Aorta (tissue), 5 donors: ENCODE measurements at regions of chr9 and their contacts with region 1.

Region 1: GRCh38 chr9:14096258-14096922 is 217.6 kb downstream of the NFIB start:
- DNase-seq: no peak
- ATAC-seq: peak; percentile 86
- H3K4me3 ChIP-seq: peak overlapping the region; percentile 12 to 15
- H3K27ac ChIP-seq: peak overlapping the region; percentile 55 to 87
- H3K4me1 ChIP-seq: peaks cover 0 to 3% of the 10 kb centered on the region in 2 donors
- H3K27me3 ChIP-seq: no peaks in the 10 kb centered on the region

Region 2: GRCh38 chr9:13878241-13878711 is 218.1 kb before region 1 on chr9:
- intact Hi-C with region 1: no loop called
- DNase-seq: no peak
- ATAC-seq: no peak
- H3K4me3 ChIP-seq: no peak overlapping the region
- H3K27ac ChIP-seq: no peak overlapping the region
- H3K4me1 ChIP-seq: no peaks in the 10 kb centered on the region
- H3K27me3 ChIP-seq: no peaks in the 10 kb centered on the region

Region 3: GRCh38 chr9:13915591-13916326 is 180.6 kb before region 1 on chr9:
- intact Hi-C with region 1: loop called in 1 of 2 experiments (anchors 10 kb)
- DNase-seq: no peak
- ATAC-seq: peak; percentile 51
- H3K4me3 ChIP-seq: no peak overlapping the region
- H3K27ac ChIP-seq: peak overlapping the region; percentile 67 to 71
- H3K4me1 ChIP-seq: peaks cover 3 to 4% of the 10 kb centered on the region in 2 donors
- H3K27me3 ChIP-seq: no peaks in the 10 kb centered on the region

Region 4: GRCh38 chr9:14030375-14031059 is 65.9 kb before region 1 on chr9:
- intact Hi-C with region 1: loop called in 1 of 2 experiments (anchors 5 kb)
- DNase-seq: no peak
- ATAC-seq: peak; percentile 72
- H3K4me3 ChIP-seq: peak overlapping the region in 1 of 2 donors; percentile 64
- H3K27ac ChIP-seq: peak overlapping the region; percentile 92 to 100
- H3K4me1 ChIP-seq: peaks cover 7 to 10% of the 10 kb centered on the region in 2 donors
- H3K27me3 ChIP-seq: no peaks in the 10 kb centered on the region

Region 5: DNA sequence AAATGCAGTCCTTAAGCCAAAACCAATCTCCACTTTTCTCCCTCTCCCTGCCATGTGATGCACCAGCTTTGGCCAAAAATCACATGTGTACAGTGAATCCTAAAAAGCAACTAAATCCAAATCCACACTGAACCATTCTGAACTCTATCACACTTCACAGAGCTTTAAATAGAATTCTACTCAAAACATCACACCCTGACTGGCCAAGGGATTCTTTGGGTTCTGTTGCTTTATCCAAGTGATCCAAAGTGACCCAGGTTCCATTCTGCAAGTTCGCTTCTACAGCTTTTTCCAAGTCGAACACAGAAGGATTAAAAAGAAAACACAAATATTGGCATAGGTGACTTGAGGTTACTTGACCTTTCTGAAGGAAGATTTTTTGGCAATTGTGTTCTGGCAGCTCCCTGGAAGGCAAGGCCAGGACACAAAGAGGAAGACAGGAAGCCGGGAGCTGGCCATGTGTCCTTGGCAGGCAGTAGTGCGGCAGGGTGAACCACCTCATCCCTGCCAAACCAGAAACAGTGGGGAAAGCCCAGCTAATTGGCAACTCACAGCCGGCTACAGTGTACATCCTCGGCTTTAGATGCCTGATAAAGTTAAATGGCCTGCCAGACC is 102.6 kb after region 1 on chr9:
- intact Hi-C with region 1: loop called in 1 of 2 experiments (anchors 10 kb)
- DNase-seq: peak in 1 of 2 donors; percentile 64
- ATAC-seq: peak; percentile 62
- H3K4me3 ChIP-seq: no peak overlapping the region
- H3K27ac ChIP-seq: peak overlapping the region in 1 of 2 donors; percentile 47
- H3K4me1 ChIP-seq: peaks cover 6 to 17% of the 10 kb centered on the region in 2 donors
- H3K27me3 ChIP-seq: no peaks in the 10 kb centered on the region

Region 6: GRCh38 chr9:14322211-14323082 is 226.1 kb after region 1 on chr9:
- intact Hi-C with region 1: loop called in 1 of 2 experiments (anchors 5 kb)
- DNase-seq: peak; percentile 95 to 97
- ATAC-seq: peak; percentile 94
- H3K4me3 ChIP-seq: peak overlapping the region; percentile 54 to 79
- H3K27ac ChIP-seq: peak overlapping the region; percentile 31 to 87
- H3K4me1 ChIP-seq: no peaks in the 10 kb centered on the region
- H3K27me3 ChIP-seq: no peaks in the 10 kb centered on the region